Activated T-helper 2 cell treated with anti-CD3 and anti-CD28 coated beads, Interferon-gamma antibody, Interleukin-2, Interleukin-4, amounts not matched to agents 10 μg/mL and 5 μg/mL and 100 μg/mL, durations not matched to agents 14 hours and 24 hours and 36 hours (primary cell): ENCODE measurements at regions of chr16 and their contacts with region 1.

Region 1: GRCh38 chr16:79071424-79071823 is 529.1 kb downstream of the MAF start:
- DNase-seq: no peak
- H3K4me3 Mint-ChIP-seq: no peak overlapping the region
- H3K27ac Mint-ChIP-seq: no peak overlapping the region
- H3K4me1 Mint-ChIP-seq: peaks cover 75% of the 10 kb centered on the region
- H3K27me3 Mint-ChIP-seq: no peaks in the 10 kb centered on the region

Region 2: GRCh38 chr16:78705694-78706093 is 365.7 kb before region 1 on chr16:
- intact Hi-C with region 1: loop called (anchors 5 kb)
- DNase-seq: no peak
- H3K4me3 Mint-ChIP-seq: no peak overlapping the region
- H3K27ac Mint-ChIP-seq: no peak overlapping the region
- H3K4me1 Mint-ChIP-seq: peaks cover 6% of the 10 kb centered on the region
- H3K27me3 Mint-ChIP-seq: peaks cover 4% of the 10 kb centered on the region

Region 3: GRCh38 chr16:78962457-78962929 is 108.9 kb before region 1 on chr16:
- intact Hi-C with region 1: loop called (anchors 2 kb)
- DNase-seq: no peak
- H3K4me3 Mint-ChIP-seq: no peak overlapping the region
- H3K27ac Mint-ChIP-seq: peak overlapping the region; percentile 6
- H3K4me1 Mint-ChIP-seq: peaks cover 12% of the 10 kb centered on the region
- H3K27me3 Mint-ChIP-seq: no peaks in the 10 kb centered on the region

Region 4: DNA sequence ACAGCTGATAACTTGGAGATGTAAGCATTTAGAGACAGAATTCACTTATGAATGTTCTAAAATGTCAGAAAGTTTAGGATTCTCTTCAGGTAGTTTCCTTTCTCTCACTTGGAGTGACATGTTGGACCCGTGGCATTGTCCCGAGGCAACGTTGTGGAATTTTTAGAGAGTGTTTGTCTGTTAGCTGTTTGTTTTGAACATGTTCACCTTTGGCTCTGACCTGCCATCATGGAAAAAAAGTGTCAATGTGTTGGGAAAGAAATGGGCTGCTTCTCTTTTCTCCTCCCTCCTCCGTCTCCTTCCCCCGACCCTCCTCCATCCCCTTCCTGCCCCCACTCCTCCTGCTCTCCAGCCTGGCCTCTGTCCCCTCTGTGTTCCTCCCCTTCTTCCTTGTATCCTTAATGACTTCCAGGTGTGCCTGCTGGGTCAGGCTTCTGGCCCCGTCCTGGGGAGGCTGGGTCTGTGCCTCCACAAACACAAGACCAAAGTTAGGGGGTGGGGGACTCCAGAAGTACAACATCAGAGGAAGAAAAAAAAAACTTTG is 66.0 kb after region 1 on chr16:
- intact Hi-C with region 1: no loop called
- DNase-seq: no peak
- H3K4me3 Mint-ChIP-seq: no peak overlapping the region
- H3K27ac Mint-ChIP-seq: no peak overlapping the region
- H3K4me1 Mint-ChIP-seq: no peaks in the 10 kb centered on the region
- H3K27me3 Mint-ChIP-seq: peaks cover 2% of the 10 kb centered on the region

Region 5: GRCh38 chr16:79169239-79169638 is 97.8 kb after region 1 on chr16:
- intact Hi-C with region 1: loop called (anchors 5 kb)
- DNase-seq: peak; percentile 22
- H3K4me3 Mint-ChIP-seq: no peak overlapping the region
- H3K27ac Mint-ChIP-seq: no peak overlapping the region
- H3K4me1 Mint-ChIP-seq: peaks cover 11% of the 10 kb centered on the region
- H3K27me3 Mint-ChIP-seq: no peaks in the 10 kb centered on the region

Region 6: GRCh38 chr16:79316004-79316458 is 244.6 kb after region 1 on chr16:
- intact Hi-C with region 1: loop called (anchors 1 kb)
- DNase-seq: peak; percentile 56
- H3K4me3 Mint-ChIP-seq: peak overlapping the region; percentile 42
- H3K27ac Mint-ChIP-seq: peak overlapping the region; percentile 89
- H3K4me1 Mint-ChIP-seq: peaks cover 44% of the 10 kb centered on the region
- H3K27me3 Mint-ChIP-seq: no peaks in the 10 kb centered on the region

Region 7: GRCh38 chr16:79717333-79718137 is 646.1 kb after region 1 on chr16:
- intact Hi-C with region 1: loop called (anchors 10 kb)
- DNase-seq: no peak
- H3K4me3 Mint-ChIP-seq: peak overlapping the region; percentile 47
- H3K27ac Mint-ChIP-seq: peak overlapping the region; percentile 63
- H3K4me1 Mint-ChIP-seq: peaks cover 40% of the 10 kb centered on the region
- H3K27me3 Mint-ChIP-seq: peaks cover 7% of the 10 kb centered on the region